ENCODE measurements at regions of chr16 and their contacts with region 1.

Region 1: DNA sequence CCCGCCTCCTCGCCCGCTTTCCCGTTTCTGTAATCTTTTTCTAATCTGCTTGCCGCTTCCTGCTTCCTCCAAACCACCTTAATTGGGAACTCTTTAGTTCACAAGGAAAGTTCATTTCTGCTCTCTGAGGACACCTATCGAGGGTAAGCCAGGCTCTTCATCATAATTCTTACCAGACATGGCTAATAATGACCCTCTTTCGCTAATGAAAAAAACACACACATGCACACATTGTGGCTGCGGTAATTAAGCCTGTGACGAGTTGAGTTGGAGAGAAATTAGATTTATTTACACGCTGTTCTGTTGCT is 100.6 kb downstream of the ZNF423 start:
- DNase-seq: no peak
- ATAC-seq: no peak
- H3K4me3 ChIP-seq: no peak overlapping the region
- H3K27ac ChIP-seq: no peak overlapping the region
- H3K4me1 ChIP-seq: no peaks in the 10 kb centered on the region
- H3K27me3 ChIP-seq: peaks cover 3% of the 10 kb centered on the region
- CTCF ChIP-seq: no peak; the same call in 1 of the 2 replicates

Region 2: GRCh38 chr16:49440156-49441065 is 314.9 kb before region 1 on chr16:
- CTCF ChIA-PET with region 1: no interaction called
- POLR2A ChIA-PET with region 1: no interaction called
- in situ Hi-C with region 1: no loop called
- intact Hi-C with region 1: no loop called
- DNase-seq: no peak
- ATAC-seq: no peak
- H3K4me3 ChIP-seq: no peak overlapping the region
- H3K27ac ChIP-seq: no peak overlapping the region
- H3K4me1 ChIP-seq: no peaks in the 10 kb centered on the region
- H3K27me3 ChIP-seq: no peaks in the 10 kb centered on the region; the same call in 1 of the 2 replicates
- CTCF ChIP-seq: no peak

Region 3: GRCh38 chr16:49739381-49739780 is 15.9 kb before region 1 on chr16:
- CTCF ChIA-PET with region 1: no interaction called
- POLR2A ChIA-PET with region 1: no interaction called
- in situ Hi-C with region 1: no loop called
- intact Hi-C with region 1: no loop called
- DNase-seq: no peak
- ATAC-seq: no peak
- H3K4me3 ChIP-seq: no peak overlapping the region
- H3K27ac ChIP-seq: no peak overlapping the region
- H3K4me1 ChIP-seq: no peaks in the 10 kb centered on the region
- H3K27me3 ChIP-seq: no peaks in the 10 kb centered on the region; the same call in 1 of the 2 replicates
- CTCF ChIP-seq: no peak; the same call in 1 of the 2 replicates

Region 4: DNA sequence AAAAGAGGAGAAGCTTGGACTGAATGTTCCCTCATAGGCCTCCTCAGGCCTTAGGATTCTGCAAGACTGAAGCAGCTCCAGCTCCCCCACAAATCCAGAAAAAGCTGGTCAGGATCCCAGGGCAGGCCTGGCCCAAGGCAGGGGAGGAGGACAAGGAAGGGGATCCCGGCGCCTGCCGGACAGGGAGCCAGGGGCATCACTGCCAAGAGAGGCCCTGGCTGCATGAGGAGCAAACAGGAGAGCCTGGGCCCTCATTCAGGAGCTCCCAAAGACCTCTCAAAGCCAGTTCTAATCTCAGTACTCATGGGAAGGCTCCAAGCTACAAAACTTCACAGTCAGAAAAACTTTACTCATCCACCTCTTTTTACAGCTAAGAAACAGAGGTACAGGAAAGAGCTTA is 33.3 kb after region 1 on chr16:
- CTCF ChIA-PET with region 1: no interaction called
- POLR2A ChIA-PET with region 1: no interaction called
- in situ Hi-C with region 1: no loop called
- intact Hi-C with region 1: loop called (anchors 2 kb)
- DNase-seq: no peak
- ATAC-seq: no peak
- H3K4me3 ChIP-seq: no peak overlapping the region
- H3K27ac ChIP-seq: no peak overlapping the region
- H3K4me1 ChIP-seq: no peaks in the 10 kb centered on the region
- H3K27me3 ChIP-seq: no peaks in the 10 kb centered on the region; the same call in 1 of the 2 replicates
- CTCF ChIP-seq: no peak